ENCODE measurements at regions of chr2 and their contacts with region 1.

Region 1: DNA sequence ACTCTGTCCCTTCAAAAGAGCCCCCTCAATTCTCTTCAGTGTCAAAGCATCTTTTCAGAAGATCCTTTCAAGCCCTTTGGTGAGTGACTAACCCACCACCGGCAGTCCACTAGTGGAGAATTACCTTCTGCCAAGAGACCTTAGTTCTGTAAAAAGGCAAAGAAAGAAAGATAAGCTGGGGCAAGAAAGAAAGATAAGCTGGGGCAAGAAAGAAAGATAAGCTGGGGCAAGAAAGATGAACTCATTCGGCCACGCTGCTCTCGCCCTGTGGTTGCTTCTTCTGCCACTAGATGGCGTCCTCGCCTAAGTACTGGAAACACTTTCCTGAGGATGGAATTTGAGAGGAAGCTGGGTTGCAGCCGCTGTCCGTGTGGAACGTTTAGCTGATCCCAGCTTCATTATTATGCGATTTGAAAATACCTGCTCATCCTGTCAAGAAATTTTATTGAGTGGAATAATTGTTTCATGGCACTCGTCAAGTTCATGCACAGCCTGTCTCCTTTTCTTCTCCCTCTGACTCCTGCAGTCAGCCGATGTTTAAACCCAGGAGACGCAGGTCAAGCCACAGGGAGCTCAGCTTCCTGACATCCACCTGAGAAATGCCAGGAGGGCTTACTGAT is 17.3 kb upstream of the ANXA4 start:
- DNase-seq: peak; percentile 94
- ATAC-seq: peak; percentile 84
- H3K4me3 ChIP-seq: peak overlapping the region; percentile 72
- H3K27ac ChIP-seq: no peak overlapping the region
- H3K4me1 ChIP-seq: no peaks in the 10 kb centered on the region
- H3K27me3 ChIP-seq: no peaks in the 10 kb centered on the region
- CTCF ChIP-seq: peak; percentile 93

Region 2: GRCh38 chr2:69755862-69756467 is 31.3 kb after region 1 on chr2:
- CTCF ChIA-PET with region 1: interaction called, 28 read pairs
- POLR2A ChIA-PET with region 1: no interaction called
- intact Hi-C with region 1: no loop called
- DNase-seq: peak; percentile 97
- ATAC-seq: peak; percentile 98
- H3K4me3 ChIP-seq: peak overlapping the region; percentile 47
- H3K27ac ChIP-seq: peak overlapping the region; percentile 83
- H3K4me1 ChIP-seq: peaks cover 15% of the 10 kb centered on the region
- H3K27me3 ChIP-seq: no peaks in the 10 kb centered on the region
- CTCF ChIP-seq: no peak

Region 3: GRCh38 chr2:69796174-69796573 is 71.5 kb after region 1 on chr2:
- CTCF ChIA-PET with region 1: interaction called, 5 read pairs
- POLR2A ChIA-PET with region 1: no interaction called
- intact Hi-C with region 1: loop called (anchors 1 kb)
- DNase-seq: peak; percentile 16
- ATAC-seq: no peak
- H3K4me3 ChIP-seq: no peak overlapping the region
- H3K27ac ChIP-seq: no peak overlapping the region
- H3K4me1 ChIP-seq: peaks cover 15% of the 10 kb centered on the region
- H3K27me3 ChIP-seq: no peaks in the 10 kb centered on the region
- CTCF ChIP-seq: 0 out of 2 replicates have a peak, but pooled peaks have one; percentile 19

Region 4: GRCh38 chr2:69816923-69817542 is 92.4 kb after region 1 on chr2:
- CTCF ChIA-PET with region 1: interaction called, 89 read pairs
- POLR2A ChIA-PET with region 1: interaction called, 7 read pairs
- intact Hi-C with region 1: loop called (anchors 1 kb)
- DNase-seq: peak; percentile 97
- ATAC-seq: peak; percentile 56
- H3K4me3 ChIP-seq: no peak overlapping the region
- H3K27ac ChIP-seq: no peak overlapping the region
- H3K4me1 ChIP-seq: peaks cover 13% of the 10 kb centered on the region
- H3K27me3 ChIP-seq: no peaks in the 10 kb centered on the region
- CTCF ChIP-seq: peak; percentile 94

Measured in PC-3 (cell line).